AG04450 (cell line): ENCODE measurements at regions of chr18 and their contacts with region 1.

Region 1: GRCh38 chr18:25896178-25896780 is 194.1 kb downstream of the SS18 start:
- DNase-seq: peak; percentile 29
- H3K4me3 ChIP-seq: no peak overlapping the region
- H3K27ac ChIP-seq: no peak overlapping the region
- H3K27me3 ChIP-seq: no peaks in the 10 kb centered on the region
- CTCF ChIP-seq: peak; percentile 86

Region 2: DNA sequence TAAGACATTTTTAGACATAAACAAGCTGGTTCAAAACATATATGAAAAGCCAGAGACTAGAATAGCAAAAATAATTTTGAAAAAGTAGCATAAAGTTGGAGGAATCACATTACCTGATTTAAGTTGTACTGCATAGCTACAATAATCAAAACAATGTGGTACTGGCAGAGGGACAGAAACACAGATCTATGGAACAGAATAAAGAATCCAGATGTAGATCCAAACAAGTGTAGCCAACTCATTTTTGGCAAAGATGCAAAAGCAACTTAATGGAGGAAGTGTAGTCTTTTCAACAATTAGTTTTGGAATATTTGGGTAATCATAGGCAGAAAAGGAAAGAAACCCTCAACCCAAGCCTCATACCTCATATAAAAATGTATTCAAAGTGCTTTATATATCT is 265.6 kb before region 1 on chr18:
- CTCF ChIA-PET with region 1: no interaction called
- POLR2A ChIA-PET with region 1: no interaction called
- DNase-seq: no peak
- H3K4me3 ChIP-seq: no peak overlapping the region
- H3K27ac ChIP-seq: no peak overlapping the region
- H3K27me3 ChIP-seq: no peaks in the 10 kb centered on the region
- CTCF ChIP-seq: no peak

Region 3: GRCh38 chr18:25915907-25916306 is 19.6 kb after region 1 on chr18:
- CTCF ChIA-PET with region 1: interaction called, 10 read pairs
- POLR2A ChIA-PET with region 1: no interaction called
- DNase-seq: no peak
- H3K4me3 ChIP-seq: no peak overlapping the region
- H3K27ac ChIP-seq: no peak overlapping the region
- H3K27me3 ChIP-seq: no peaks in the 10 kb centered on the region
- CTCF ChIP-seq: peak; percentile 17; the same call in 1 of the 2 replicates